ENCODE measurements at regions of chr16 and their contacts with region 1.

Region 1: GRCh38 chr16:30472328-30472942 is at the start of gene ITGAL:
- DNase-seq: peak; percentile 95
- H3K4me3 Mint-ChIP-seq: peak within 1 kb of the TSS; percentile 100
- H3K27ac Mint-ChIP-seq: peak within 1 kb of the TSS; percentile 96
- H3K4me1 Mint-ChIP-seq: peaks cover 57% of the 10 kb centered on the region
- H3K27me3 Mint-ChIP-seq: no peaks in the 10 kb centered on the region
- total RNA-seq, gene ITGAL: 264 and 267 TPM in 2 replicates

Region 2: GRCh38 chr16:30445408-30446202 is 26.8 kb before region 1 on chr16 and contains the start of gene SEPHS2:
- intact Hi-C with region 1: loop called (anchors 1 kb)
- DNase-seq: peak; percentile 99
- H3K4me3 Mint-ChIP-seq: peak within 1 kb of the TSS; percentile 89
- H3K27ac Mint-ChIP-seq: peak within 1 kb of the TSS; percentile 93
- H3K4me1 Mint-ChIP-seq: peaks cover 34% of the 10 kb centered on the region
- H3K27me3 Mint-ChIP-seq: no peaks in the 10 kb centered on the region
- total RNA-seq, gene SEPHS2: 79.7 and 80.2 TPM in 2 replicates

Region 3: GRCh38 chr16:30458561-30459394 is 13.7 kb before region 1 on chr16:
- intact Hi-C with region 1: loop called (anchors 1 kb)
- DNase-seq: peak; percentile 96
- H3K4me3 Mint-ChIP-seq: peak overlapping the region; percentile 75
- H3K27ac Mint-ChIP-seq: peak overlapping the region; percentile 95
- H3K4me1 Mint-ChIP-seq: peaks cover 68% of the 10 kb centered on the region
- H3K27me3 Mint-ChIP-seq: no peaks in the 10 kb centered on the region

Region 4: DNA sequence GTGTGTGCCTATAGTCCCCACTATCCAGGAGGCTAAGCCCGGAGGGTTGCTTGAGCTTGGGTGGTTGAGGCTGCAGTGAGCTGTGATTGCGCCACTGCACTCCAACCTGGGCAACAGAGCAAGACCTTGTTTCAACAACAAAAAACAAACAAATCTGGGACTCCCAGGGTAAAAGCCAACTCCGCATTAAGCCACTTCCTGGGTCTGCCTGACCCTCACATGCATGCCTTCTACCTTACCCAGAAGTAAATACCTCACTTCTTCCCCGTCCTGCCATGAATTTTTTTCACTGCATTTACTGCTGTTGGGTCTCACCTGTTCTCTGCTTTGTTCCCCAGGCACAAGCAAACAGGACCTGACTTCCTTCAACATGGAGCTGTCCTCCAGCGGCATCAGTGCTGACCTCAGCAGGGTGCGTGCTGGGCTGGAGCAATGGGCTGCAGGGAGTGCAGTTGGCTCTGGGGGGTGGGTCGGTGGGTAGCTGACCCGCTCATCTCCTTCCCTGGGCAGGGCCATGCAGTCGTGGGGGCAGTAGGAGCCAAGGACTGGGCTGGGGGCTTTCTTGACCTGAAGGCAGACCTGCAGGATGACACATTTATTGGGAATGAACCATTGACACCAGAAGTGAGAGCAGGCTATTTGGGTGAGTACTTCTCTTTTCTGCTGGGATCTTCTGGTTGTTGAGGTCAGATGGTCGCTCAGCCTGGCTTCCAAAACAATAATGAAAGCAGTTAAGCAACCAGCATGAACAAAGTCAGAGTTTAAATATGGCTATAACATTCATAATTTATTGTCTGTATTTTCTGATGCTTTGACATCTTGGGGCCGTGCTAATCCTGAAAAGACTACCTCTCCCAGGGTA is 16.5 kb after region 1 on chr16:
- intact Hi-C with region 1: loop called (anchors 2 kb)
- DNase-seq: no peak
- H3K4me3 Mint-ChIP-seq: no peak overlapping the region
- H3K27ac Mint-ChIP-seq: peak overlapping the region; percentile 60
- H3K4me1 Mint-ChIP-seq: peaks cover 38% of the 10 kb centered on the region
- H3K27me3 Mint-ChIP-seq: no peaks in the 10 kb centered on the region

Region 5: GRCh38 chr16:30526823-30527635 is 54.6 kb after region 1 on chr16:
- intact Hi-C with region 1: loop called (anchors 2 kb)
- DNase-seq: peak; percentile 98
- H3K4me3 Mint-ChIP-seq: peak overlapping the region; percentile 81
- H3K27ac Mint-ChIP-seq: peak overlapping the region; percentile 81
- H3K4me1 Mint-ChIP-seq: peaks cover 26% of the 10 kb centered on the region
- H3K27me3 Mint-ChIP-seq: no peaks in the 10 kb centered on the region

Region 6: GRCh38 chr16:30571695-30572600 is 99.5 kb after region 1 on chr16 and contains the start of gene ZNF688:
- intact Hi-C with region 1: loop called (anchors 5 kb)
- DNase-seq: peak; percentile 98
- H3K4me3 Mint-ChIP-seq: peak within 1 kb of the TSS; percentile 97
- H3K27ac Mint-ChIP-seq: peak within 1 kb of the TSS; percentile 91
- H3K4me1 Mint-ChIP-seq: peaks cover 49% of the 10 kb centered on the region
- H3K27me3 Mint-ChIP-seq: no peaks in the 10 kb centered on the region
- total RNA-seq, gene ZNF688: 6.6 and 8.0 TPM in 2 replicates

Region 7: GRCh38 chr16:30677931-30678585 is 205.6 kb after region 1 on chr16:
- intact Hi-C with region 1: no loop called
- DNase-seq: no peak
- H3K4me3 Mint-ChIP-seq: no peak overlapping the region
- H3K27ac Mint-ChIP-seq: no peak overlapping the region
- H3K4me1 Mint-ChIP-seq: no peaks in the 10 kb centered on the region
- H3K27me3 Mint-ChIP-seq: no peaks in the 10 kb centered on the region